Activated CD4-positive, alpha-beta T cell treated with anti-CD3 and anti-CD28 coated beads, Interleukin-2, amount 10 ng/mL, durations not matched to agents 24 days and 14 days (primary cell): ENCODE measurements at regions of chr5 and their contacts with region 1.

Region 1: DNA sequence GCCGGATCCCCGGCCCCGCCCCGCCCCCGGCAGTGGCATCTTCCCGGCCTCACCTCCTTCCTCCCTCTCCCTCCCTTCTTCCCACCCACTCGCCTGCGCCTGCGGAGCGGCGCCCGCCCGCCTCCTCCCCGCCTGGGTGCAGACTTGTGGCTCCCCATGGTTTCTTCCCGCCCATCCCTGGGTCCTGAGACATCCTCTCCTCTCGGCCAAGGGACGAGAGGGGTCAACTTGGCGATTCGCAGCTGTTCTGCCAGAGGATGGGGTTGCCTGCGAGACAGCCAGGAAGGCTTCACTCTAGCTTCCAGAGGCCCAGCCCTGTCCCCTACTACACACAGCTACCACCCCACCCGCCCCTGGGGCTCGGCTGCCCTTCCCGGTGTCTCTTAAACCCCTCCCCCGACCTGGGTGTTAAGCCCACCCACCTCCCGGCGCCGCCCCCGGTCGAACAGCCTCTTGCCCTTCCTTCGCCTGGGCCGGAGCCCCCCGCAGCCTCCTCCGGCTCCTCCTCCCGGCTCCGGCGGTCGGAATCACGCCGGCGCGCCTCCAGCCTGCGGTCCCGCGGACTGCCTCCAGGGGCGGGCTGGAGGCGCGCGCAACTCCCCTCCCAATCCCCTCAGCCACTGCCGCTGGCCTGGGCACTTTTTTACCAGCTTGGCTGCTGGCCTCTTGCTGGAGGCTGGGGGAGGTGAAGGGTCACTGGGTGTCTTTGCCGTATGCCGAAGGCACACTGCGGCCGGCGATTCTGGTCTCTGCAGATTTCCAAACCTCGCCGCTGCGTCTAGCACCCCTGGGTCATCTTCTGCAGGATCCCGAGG is 1.9 kb downstream of the JADE2 start:
- DNase-seq: peak; percentile 92
- H3K4me3 Mint-ChIP-seq: peak overlapping the region; percentile 89
- H3K27ac Mint-ChIP-seq: peak overlapping the region; percentile 94
- H3K4me1 Mint-ChIP-seq: peaks cover 30% of the 10 kb centered on the region
- H3K27me3 Mint-ChIP-seq: no peaks in the 10 kb centered on the region

Region 2: GRCh38 chr5:134176511-134177368 is 350.6 kb before region 1 on chr5 and contains the start of gene SKP1:
- intact Hi-C with region 1: loop called (anchors 1 kb)
- DNase-seq: peak; percentile 96
- H3K4me3 Mint-ChIP-seq: peak within 1 kb of the TSS; percentile 93
- H3K27ac Mint-ChIP-seq: peak within 1 kb of the TSS; percentile 97
- H3K4me1 Mint-ChIP-seq: peaks cover 21% of the 10 kb centered on the region
- H3K27me3 Mint-ChIP-seq: no peaks in the 10 kb centered on the region
- total RNA-seq, gene SKP1: 266 and 289 TPM in 2 replicates

Region 3: DNA sequence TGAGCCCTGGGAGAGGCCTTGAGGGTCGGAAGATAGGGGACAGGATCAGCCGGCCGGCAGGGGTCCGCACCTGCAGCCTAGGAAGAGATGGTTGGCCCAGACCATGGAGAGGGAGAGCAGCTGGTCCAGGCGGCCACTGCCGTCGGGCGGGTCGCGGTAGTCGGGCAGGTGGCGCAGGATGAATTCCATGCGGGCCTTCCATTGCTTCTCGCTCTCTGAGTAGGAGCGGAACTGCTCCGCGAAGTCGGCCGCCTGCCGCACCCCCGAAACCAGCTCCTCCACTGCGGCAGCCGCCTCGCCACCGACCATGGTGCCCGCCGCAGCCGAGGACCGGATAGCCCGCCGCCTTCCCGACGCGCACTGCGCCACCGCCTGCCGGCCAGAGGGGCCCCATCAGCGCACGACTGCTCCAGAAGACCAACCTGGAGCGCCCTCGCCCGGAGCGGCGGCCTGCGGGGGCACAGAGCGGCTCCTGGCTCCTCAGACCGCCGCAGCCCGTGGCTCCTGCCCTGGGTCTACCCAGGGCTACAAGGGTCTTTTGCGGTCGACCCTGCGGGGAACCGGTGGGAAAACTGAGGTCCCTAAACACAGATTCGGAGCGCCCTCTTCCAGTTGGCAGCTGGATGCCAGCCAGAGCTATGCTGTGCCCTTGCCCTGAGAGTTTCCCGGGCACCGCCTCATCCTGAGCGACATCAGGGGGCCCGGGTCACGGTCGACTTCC is 115.6 kb before region 1 on chr5 and contains the start of gene CDKN2AIPNL:
- intact Hi-C with region 1: loop called (anchors 1 kb)
- DNase-seq: peak; percentile 97
- H3K4me3 Mint-ChIP-seq: peak within 1 kb of the TSS; percentile 98
- H3K27ac Mint-ChIP-seq: peak within 1 kb of the TSS; percentile 92
- H3K4me1 Mint-ChIP-seq: peaks cover 24% of the 10 kb centered on the region
- H3K27me3 Mint-ChIP-seq: no peaks in the 10 kb centered on the region
- total RNA-seq, gene CDKN2AIPNL: 32.0 and 34.3 TPM in 2 replicates

Region 4: GRCh38 chr5:134511788-134512650 is 15.3 kb before region 1 on chr5:
- intact Hi-C with region 1: loop called (anchors 1 kb)
- DNase-seq: no peak
- H3K4me3 Mint-ChIP-seq: no peak overlapping the region
- H3K27ac Mint-ChIP-seq: peak overlapping the region; percentile 88
- H3K4me1 Mint-ChIP-seq: peaks cover 46% of the 10 kb centered on the region
- H3K27me3 Mint-ChIP-seq: no peaks in the 10 kb centered on the region

Region 5: DNA sequence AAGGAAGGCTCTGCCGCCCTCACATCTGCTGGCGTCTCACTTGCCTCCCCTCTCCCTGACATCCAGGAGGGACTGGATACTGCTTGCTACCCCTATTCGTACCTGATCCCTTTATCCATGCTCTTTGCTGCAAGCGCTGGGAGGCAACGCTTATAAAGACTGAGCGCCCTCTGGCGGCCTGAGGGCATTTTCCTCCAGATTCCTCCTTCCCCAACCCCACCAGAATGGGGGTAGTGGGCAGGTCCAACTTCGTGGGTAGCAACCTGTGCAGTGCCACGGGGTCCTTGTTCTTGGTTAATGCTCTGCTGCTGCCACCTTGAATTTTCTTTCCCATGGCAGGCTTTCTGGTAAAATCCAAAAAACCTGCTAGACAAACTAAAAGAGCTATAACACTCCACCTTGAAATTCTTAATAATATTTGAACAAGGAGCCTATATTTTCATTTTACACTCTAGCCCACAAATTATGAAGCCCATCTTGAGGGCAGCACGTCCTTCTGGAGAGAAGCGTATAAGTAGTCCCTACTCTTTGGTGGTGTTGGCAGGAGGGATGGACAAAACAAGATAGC is 50.5 kb after region 1 on chr5:
- intact Hi-C with region 1: loop called (anchors 2 kb)
- DNase-seq: peak; percentile 93
- H3K4me3 Mint-ChIP-seq: no peak overlapping the region
- H3K27ac Mint-ChIP-seq: peak overlapping the region; percentile 32
- H3K4me1 Mint-ChIP-seq: peaks cover 7% of the 10 kb centered on the region
- H3K27me3 Mint-ChIP-seq: no peaks in the 10 kb centered on the region